ENCODE measurements at regions of chr2 and their contacts with region 1.

Region 1: DNA sequence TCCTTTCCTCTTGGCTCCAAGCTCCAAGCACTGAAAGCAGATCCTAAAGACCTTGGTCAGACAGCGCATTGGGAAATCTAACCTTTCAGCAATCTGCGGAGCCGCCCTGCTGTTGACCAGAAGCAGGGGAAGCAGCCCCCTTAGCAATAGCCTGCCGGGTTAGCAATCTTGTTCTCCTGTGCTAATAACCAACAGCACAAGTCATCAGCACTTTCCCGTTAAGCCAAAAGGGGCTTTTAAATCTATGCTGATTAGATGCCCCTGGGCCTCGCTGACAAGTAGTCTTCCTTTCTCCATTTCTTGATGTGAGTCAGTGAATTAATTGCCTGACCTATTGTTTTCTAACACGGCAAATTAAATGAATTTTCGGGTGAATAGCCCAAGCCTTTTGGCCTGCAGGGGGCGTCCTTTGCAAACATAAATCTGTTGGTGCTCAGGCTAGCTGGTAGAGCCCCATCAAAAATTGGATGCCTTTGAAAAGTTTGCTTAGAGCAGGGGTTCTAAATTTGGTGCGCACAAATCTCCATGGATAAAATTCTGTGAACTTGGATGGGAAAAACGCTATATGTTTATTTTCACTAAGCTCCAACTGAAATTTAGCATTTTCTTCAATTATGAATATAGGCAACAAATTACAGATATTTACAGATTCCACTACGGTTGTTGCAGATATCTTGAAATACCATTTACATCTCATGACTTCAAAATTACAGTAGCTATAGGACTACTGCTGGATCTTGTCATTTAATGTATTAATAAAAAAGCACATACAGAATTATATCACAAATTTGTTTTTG is 24.6 kb downstream of the MAIP1 start:
- DNase-seq: peak; percentile 66 to 97 (median 90)

Region 2: DNA sequence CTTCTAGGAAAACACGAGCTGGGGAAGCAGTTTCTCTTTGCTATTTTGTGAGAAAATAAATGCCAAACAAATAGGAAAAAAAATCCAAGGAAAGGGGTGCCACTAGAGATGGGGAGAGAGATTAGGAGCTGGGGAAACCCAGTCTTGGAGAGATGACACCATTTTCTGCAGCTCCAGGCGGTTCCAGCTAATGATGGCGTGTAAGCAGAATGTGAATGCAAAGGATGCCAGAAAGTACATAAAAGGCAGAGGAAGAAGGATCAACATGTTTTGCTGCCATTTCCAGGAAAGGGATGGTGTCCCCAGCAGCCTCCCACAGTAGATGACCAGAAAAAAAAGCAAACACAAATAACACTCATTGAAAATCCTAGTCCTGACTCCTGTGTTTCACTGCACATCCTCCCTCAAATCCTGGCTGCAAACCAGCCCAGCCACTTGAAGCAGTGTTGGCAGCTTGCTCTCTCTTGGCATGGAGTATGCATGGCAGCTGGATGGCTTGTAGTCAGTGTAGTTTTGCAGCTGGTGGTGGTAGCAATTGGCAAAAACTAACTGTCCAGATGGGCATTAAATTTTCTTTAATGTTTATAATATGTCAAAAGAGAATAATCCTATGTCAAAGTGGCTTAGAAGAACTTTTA is 222.7 kb before region 1 on chr2:
- intact Hi-C with region 1: no loop called
- DNase-seq: peak; percentile 75 to 97 (median 85)

Region 3: DNA sequence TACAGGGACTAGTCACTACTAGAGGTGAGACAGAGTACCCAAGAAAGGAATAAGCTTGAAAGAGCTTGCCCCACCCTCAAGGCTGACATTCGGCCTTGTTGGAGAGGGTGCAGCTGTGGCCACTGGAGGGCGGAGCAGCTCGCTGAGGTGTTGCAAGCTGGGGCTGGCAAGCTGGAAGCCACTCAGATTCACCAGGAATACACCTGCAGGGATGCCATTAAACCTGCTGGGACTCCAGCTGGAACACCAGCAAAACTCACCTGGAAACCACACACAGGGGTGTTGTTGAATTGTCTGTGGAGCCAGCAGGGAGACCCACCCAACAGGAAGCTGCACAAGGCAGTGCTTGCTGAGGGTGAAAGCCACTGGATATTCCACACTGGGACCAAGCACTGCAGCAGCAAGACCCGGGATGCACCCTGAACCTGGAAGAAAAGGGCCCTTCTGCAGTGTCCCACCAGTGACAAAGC is 503.7 kb after region 1 on chr2:
- intact Hi-C with region 1: loop called (anchors 1 kb)
- DNase-seq: no peak